ENCODE measurements at regions of chr19 and their contacts with region 1.

Region 1: GRCh38 chr19:33430674-33431277 is 57.3 kb downstream of the CEBPG start:
- DNase-seq: peak; percentile 84
- ATAC-seq: peak; percentile 92
- H3K4me3 Mint-ChIP-seq: peak overlapping the region; percentile 39
- H3K27ac Mint-ChIP-seq: peak overlapping the region; percentile 76
- H3K4me1 Mint-ChIP-seq: peaks cover 11% of the 10 kb centered on the region
- H3K27me3 Mint-ChIP-seq: no peaks in the 10 kb centered on the region

Region 2: GRCh38 chr19:33273881-33274682 is 156.7 kb before region 1 on chr19:
- CTCF ChIA-PET with region 1: no interaction called
- POLR2A ChIA-PET with region 1: no interaction called
- intact Hi-C with region 1: no loop called
- DNase-seq: peak; percentile 66
- ATAC-seq: peak; percentile 80
- H3K4me3 Mint-ChIP-seq: no peak overlapping the region
- H3K27ac Mint-ChIP-seq: no peak overlapping the region
- H3K4me1 Mint-ChIP-seq: peaks cover 6% of the 10 kb centered on the region
- H3K27me3 Mint-ChIP-seq: no peaks in the 10 kb centered on the region

Region 3: DNA sequence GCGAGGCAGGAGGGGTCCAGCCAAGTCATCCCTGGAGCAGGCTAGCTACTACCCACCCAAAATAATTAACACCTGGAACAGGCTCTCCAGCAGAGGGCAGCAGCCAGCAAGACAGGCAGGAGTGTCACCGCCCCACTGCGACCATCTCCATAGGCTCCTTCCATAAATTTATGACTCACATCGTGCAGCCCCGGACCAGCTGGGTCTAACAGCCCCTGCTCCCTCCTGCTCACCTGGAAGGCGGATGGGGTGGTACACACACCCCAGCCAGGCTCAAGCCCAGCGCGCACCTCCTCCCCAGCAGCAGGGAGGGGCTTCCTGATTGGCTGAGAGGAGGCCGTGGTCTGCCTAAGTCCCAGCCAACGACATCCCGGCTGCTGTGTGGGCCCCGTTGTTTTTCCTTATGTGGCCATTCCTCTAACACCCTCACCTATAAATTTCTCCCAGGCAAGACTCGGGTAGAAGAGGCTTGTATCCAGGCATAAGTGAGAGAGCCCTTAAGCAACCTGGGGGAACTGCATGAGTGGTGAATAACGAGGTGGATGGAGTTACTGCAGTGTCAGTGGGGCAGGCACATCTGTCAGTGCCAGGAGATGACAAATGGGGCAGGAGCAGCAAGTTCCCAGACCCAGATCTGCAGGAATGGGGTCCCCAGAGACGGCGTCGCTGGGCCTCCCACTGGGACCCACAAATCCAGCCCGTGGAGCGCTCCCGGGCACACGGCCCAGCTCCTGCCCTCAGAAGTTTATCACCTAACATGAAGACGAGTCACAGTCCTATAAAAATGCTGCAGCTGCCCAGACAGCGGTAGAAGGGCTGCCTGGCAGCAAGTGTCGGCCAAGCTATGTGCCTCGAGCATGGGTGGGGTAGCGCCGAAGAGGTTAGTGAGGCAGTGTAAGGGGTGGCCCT is 14.2 kb before region 1 on chr19:
- CTCF ChIA-PET with region 1: interaction called, 16 read pairs
- POLR2A ChIA-PET with region 1: no interaction called
- intact Hi-C with region 1: no loop called
- DNase-seq: peak; percentile 84
- ATAC-seq: peak; percentile 89
- H3K4me3 Mint-ChIP-seq: peak overlapping the region; percentile 33
- H3K27ac Mint-ChIP-seq: no peak overlapping the region
- H3K4me1 Mint-ChIP-seq: peaks cover 5% of the 10 kb centered on the region
- H3K27me3 Mint-ChIP-seq: no peaks in the 10 kb centered on the region

Region 4: DNA sequence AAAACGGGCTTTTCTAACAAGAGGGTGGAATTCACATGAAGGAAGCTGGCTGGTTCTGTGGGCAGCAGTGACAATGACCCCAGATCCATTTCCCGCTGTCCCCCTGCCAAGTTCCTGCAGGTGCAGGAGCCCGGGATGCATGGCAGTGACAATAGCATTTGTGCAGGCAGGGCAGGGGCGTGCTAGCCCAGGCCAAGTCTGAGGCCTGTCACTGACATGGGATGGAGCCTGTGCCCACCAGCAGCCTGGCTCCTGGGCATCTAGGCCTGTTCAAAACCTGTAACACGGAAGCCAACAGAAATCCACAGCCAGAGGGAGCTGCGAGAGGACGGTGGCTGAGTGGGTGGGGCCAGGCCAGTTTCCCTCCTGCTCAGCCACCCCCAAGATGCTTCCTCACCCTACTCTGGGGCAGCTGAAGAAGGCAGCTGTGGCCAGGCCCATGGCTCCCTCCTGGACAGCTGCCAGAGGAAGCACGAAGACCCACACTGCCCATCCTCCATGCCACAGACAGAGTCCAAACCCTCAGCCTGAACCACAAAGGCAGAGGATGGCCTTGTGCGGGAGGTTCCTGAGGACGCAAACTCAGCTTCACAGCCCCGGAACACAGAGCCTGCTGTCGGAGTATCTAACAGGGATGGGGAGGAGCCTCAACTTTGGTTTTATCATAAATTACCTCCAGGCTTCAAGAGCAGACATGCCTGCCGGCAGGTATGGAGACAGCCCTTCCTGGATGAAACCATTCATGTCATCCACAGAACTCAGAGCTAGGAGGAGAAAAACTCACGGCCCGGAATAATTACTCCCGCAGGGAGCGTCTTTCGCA is 16.8 kb after region 1 on chr19:
- CTCF ChIA-PET with region 1: interaction called, 14 read pairs
- POLR2A ChIA-PET with region 1: no interaction called
- intact Hi-C with region 1: no loop called
- DNase-seq: no peak
- ATAC-seq: no peak
- H3K4me3 Mint-ChIP-seq: no peak overlapping the region
- H3K27ac Mint-ChIP-seq: no peak overlapping the region
- H3K4me1 Mint-ChIP-seq: no peaks in the 10 kb centered on the region
- H3K27me3 Mint-ChIP-seq: no peaks in the 10 kb centered on the region

Region 5: GRCh38 chr19:33771384-33772101 is 340.8 kb after region 1 on chr19:
- CTCF ChIA-PET with region 1: interaction called, 14 read pairs
- POLR2A ChIA-PET with region 1: no interaction called
- intact Hi-C with region 1: loop called (anchors 1 kb)
- DNase-seq: peak; percentile 86
- ATAC-seq: peak; percentile 78
- H3K4me3 Mint-ChIP-seq: no peak overlapping the region
- H3K27ac Mint-ChIP-seq: no peak overlapping the region
- H3K4me1 Mint-ChIP-seq: no peaks in the 10 kb centered on the region
- H3K27me3 Mint-ChIP-seq: peaks cover 12% of the 10 kb centered on the region

Region 6: DNA sequence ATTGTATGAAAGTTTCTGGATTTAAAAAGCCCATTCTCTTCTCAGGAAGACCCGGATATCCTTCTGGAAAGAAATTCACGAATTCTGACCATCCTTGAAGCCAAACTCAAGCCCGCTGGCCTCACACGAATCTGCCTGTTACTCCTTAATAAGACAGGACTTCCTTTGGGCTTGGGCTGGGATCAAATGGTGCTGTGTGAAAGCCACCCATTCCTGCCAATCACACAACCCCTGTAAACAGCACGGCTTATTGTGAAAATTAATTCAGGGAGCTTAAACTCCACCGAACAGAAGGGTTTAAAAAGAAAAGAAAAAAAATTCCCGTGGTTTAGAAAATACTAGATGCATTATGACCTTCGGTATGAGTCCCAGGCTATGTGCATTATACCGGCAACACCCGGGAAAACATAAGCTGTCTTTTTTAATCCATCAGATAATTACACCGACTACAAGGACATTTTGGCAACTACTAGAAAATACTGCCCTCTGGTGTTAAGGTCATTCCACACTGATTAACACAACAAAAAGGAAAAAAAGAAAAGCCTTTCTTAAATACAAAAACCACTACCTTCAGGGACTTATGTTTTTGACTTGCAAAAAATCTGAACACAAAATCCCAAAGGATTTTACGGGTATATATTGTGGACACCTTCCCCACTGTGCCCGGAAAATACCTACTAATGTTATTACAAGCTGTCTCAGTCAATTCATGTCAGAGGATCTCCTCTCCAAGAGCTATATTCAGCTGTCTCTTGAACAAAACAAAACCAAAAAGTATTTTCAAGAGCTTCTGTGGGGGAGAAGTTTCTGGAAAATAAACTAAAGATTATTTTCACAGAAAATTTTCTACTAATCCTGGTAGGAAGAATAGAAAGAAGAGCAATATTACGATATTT is 665.5 kb after region 1 on chr19:
- CTCF ChIA-PET with region 1: interaction called, 3 read pairs
- POLR2A ChIA-PET with region 1: no interaction called
- intact Hi-C with region 1: loop called in 1 of 2 experiments (anchors 10 kb)
- DNase-seq: no peak
- ATAC-seq: no peak
- H3K4me3 Mint-ChIP-seq: no peak overlapping the region
- H3K27ac Mint-ChIP-seq: no peak overlapping the region
- H3K4me1 Mint-ChIP-seq: no peaks in the 10 kb centered on the region
- H3K27me3 Mint-ChIP-seq: peaks cover 8% of the 10 kb centered on the region

Measured in activated CD4-positive, alpha-beta T cell treated with anti-CD3 and anti-CD28 coated beads for 36 hours (primary cell).